ENCODE measurements at regions of chr2 and their contacts with region 1.

Region 1: GRCh38 chr2:149561309-149561926 is 26.2 kb downstream of the MMADHC start:
- DNase-seq: peak; percentile 8
- H3K4me3 ChIP-seq: no peak overlapping the region
- H3K27ac ChIP-seq: no peak overlapping the region
- H3K4me1 ChIP-seq: no peaks in the 10 kb centered on the region
- H3K27me3 ChIP-seq: no peaks in the 10 kb centered on the region
- CTCF ChIP-seq: peak; percentile 66 to 84

Region 2: GRCh38 chr2:147937744-147938349 is 1623.6 kb before region 1 on chr2:
- CTCF ChIA-PET with region 1: no interaction called
- dilution Hi-C with region 1: no loop called
- in situ Hi-C with region 1: no loop called
- intact Hi-C with region 1: loop called (anchors 10 kb)
- DNase-seq: peak; percentile 3
- H3K4me3 ChIP-seq: no peak overlapping the region
- H3K27ac ChIP-seq: no peak overlapping the region
- H3K4me1 ChIP-seq: no peaks in the 10 kb centered on the region
- H3K27me3 ChIP-seq: no peaks in the 10 kb centered on the region
- CTCF ChIP-seq: peak; percentile 76 to 88

Region 3: DNA sequence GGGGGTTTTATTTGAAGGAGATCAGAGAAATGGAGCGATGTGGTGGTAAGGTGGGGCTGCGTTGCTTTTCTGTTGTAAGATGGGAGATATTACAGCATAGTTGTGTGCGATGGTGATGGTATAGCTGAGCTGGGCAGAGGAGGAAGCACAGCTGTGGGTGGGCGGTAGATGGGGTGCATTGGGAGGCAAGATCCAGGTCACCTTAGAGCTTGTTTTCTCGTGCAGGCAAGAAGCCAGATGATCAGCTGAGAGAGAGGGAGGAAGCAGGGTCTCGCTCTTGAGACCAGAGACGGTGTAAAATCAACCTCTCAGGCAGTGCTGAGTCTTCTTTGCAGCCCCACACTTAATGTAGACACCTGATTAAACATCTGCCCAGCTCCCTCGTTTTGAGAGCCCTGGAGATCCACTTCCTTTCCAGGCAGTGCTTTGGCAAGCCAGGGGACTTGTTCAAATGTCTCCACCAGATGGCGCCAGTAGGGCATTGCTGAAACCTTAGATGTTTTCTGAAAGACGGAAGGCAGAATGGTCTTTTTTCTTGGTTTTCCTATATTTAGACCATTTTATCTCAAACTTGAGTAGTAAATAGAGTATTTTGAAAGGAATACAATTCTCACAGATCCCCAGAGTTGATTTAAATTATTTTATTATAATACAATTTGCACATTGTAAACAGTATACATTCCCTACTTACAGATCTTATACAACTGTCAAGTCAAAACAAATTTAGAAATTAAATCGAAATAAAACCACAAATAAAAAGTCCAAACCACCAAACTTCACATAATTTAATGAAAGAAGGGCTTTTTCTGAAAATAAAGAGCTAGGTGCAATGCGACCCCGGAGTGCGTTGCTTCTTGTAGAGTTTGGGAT is 544.1 kb before region 1 on chr2:
- CTCF ChIA-PET with region 1: interaction called, 4 read pairs
- dilution Hi-C with region 1: loop called (anchors 25 kb)
- in situ Hi-C with region 1: loop called (anchors 5 kb)
- intact Hi-C with region 1: loop called (anchors 1 kb)
- DNase-seq: peak; percentile 40
- H3K4me3 ChIP-seq: no peak overlapping the region
- H3K27ac ChIP-seq: no peak overlapping the region
- H3K4me1 ChIP-seq: no peaks in the 10 kb centered on the region
- H3K27me3 ChIP-seq: no peaks in the 10 kb centered on the region
- CTCF ChIP-seq: peak; percentile 87 to 90

Region 4: DNA sequence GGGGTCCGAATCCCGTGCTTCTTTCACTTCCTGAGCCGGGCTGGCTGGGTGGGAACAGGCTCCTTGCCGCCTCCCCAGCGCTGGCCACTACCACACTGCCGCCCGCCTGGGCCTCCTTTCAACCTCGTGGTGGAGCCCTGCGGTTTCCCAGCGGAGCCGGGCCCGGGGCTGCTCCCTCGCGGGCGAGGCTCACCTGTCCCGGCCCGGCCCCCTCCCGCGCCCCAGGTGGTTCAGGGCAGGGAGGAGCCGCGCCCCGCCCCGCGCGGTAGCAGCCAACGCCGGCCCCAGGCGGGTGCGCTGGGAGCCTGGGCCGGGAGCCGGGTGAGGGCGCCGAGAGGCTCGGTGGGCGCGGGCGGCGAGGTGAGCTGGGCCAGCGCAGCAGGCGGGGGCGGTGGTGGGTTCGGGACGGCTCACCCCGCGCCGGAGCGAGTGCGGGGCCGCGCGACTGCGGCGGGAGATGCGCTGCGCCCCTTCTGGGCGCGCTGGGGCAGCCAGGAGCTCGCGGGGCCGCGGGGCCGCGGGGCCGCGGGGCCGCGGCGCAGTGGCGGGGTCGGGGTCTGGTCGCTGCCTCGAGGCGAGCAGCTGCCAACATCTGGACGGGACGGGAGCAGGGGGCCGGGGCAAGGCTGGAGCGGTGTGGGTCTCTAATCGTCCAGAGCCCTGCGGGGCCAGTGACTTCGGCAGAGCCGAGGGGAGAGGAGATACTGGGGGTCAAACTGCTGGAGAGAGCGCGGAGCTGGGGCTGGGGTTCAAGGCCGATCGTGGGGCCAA is 522.8 kb before region 1 on chr2 and contains the start of gene LYPD6B:
- CTCF ChIA-PET with region 1: interaction called, 3 read pairs
- dilution Hi-C with region 1: no loop called
- in situ Hi-C with region 1: no loop called
- intact Hi-C with region 1: loop called (anchors 1 kb)
- DNase-seq: peak; percentile 16
- H3K4me3 ChIP-seq: peak within 1 kb of the TSS; percentile 34 to 43 (median 42)
- H3K27ac ChIP-seq: no peak within 1 kb of the TSS
- H3K4me1 ChIP-seq: peaks cover 10% of the 10 kb centered on the region
- H3K27me3 ChIP-seq: no peaks in the 10 kb centered on the region
- CTCF ChIP-seq: no peak
- total RNA-seq, gene LYPD6B: 0.33 to 3.0 TPM

Region 5: DNA sequence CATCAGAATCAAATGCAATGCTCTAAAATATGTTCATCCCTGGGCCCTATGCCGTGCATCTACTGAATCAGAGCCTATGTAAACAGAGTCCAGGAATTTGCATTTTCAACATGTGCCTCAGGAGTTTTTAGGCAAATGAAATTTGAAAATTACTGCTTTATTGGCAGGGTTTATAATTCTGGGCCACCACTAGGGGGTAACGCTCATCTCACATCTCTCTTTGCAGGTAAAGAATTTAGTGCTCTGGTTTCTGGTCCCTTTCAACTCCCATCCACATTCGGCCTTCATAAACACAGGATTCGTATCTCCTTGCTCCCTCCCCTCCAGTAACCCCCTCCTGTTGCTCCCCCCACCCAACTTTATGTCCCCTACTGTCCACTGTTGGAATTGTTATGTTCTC is 473.7 kb before region 1 on chr2:
- CTCF ChIA-PET with region 1: no interaction called
- dilution Hi-C with region 1: no loop called
- in situ Hi-C with region 1: no loop called
- intact Hi-C with region 1: loop called (anchors 1 kb)
- DNase-seq: no peak
- H3K4me3 ChIP-seq: no peak overlapping the region
- H3K27ac ChIP-seq: no peak overlapping the region
- H3K4me1 ChIP-seq: no peaks in the 10 kb centered on the region
- H3K27me3 ChIP-seq: peaks cover 2% of the 10 kb centered on the region
- CTCF ChIP-seq: peak; percentile 50 to 63

Region 6: DNA sequence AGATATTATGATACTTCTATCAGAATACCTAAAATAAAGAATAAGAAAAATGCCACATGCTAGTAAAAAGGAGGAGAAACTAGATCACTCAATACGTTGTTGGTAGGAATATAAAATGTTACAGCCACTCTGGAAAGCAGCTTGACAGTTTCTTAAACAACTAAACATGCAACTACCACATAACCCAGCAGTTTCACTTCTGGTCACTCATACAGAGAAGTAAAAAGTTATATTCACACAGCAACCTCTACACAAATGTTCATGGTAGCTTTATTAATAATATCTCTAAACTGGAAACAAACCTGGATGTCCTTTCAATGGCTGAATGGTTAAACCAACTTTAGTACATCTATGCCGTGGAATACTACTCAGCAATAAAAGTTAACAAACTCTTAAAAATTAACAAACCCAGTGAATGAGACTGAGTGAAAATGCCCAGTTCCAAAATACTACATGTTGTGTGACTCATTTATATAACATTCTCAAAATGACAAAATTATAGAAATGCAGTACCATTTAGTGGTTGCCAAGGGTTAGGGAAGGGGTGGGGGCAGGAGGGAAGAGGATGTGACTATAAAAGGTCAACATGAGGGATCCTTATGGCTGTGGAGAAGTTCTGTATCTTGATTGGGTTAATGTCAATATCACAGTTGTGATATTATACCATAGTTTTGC is 98.0 kb before region 1 on chr2:
- CTCF ChIA-PET with region 1: no interaction called
- dilution Hi-C with region 1: no loop called
- in situ Hi-C with region 1: no loop called
- intact Hi-C with region 1: no loop called
- DNase-seq: no peak
- H3K4me3 ChIP-seq: no peak overlapping the region
- H3K27ac ChIP-seq: no peak overlapping the region
- H3K4me1 ChIP-seq: no peaks in the 10 kb centered on the region
- H3K27me3 ChIP-seq: peaks cover 2% of the 10 kb centered on the region
- CTCF ChIP-seq: no peak